ENCODE measurements at regions of chr5 and their contacts with region 1.

Region 1: GRCh38 chr5:33166522-33166921 is 274.2 kb upstream of the TARS1 start:
- DNase-seq: no peak
- H3K4me3 ChIP-seq: no peak overlapping the region
- H3K27ac ChIP-seq: no peak overlapping the region
- H3K4me1 ChIP-seq: no peaks in the 10 kb centered on the region
- H3K27me3 ChIP-seq: no peaks in the 10 kb centered on the region
- CTCF ChIP-seq: no peak

Region 2: GRCh38 chr5:32489791-32490582 is 676.5 kb before region 1 on chr5:
- CTCF ChIA-PET with region 1: no interaction called
- dilution Hi-C with region 1: no loop called
- in situ Hi-C with region 1: no loop called
- intact Hi-C with region 1: loop called (anchors 10 kb)
- DNase-seq: peak; percentile 33
- H3K4me3 ChIP-seq: no peak overlapping the region
- H3K27ac ChIP-seq: no peak overlapping the region
- H3K4me1 ChIP-seq: no peaks in the 10 kb centered on the region
- H3K27me3 ChIP-seq: no peaks in the 10 kb centered on the region
- CTCF ChIP-seq: peak; percentile 67 to 72

Region 3: GRCh38 chr5:32852535-32852934 is 314.0 kb before region 1 on chr5:
- CTCF ChIA-PET with region 1: no interaction called
- dilution Hi-C with region 1: no loop called
- in situ Hi-C with region 1: no loop called
- intact Hi-C with region 1: no loop called
- DNase-seq: no peak
- H3K4me3 ChIP-seq: no peak overlapping the region
- H3K27ac ChIP-seq: no peak overlapping the region
- H3K4me1 ChIP-seq: no peaks in the 10 kb centered on the region
- H3K27me3 ChIP-seq: peaks cover 2% of the 10 kb centered on the region
- CTCF ChIP-seq: peak in 1 of 2 donors; percentile 17

Region 4: DNA sequence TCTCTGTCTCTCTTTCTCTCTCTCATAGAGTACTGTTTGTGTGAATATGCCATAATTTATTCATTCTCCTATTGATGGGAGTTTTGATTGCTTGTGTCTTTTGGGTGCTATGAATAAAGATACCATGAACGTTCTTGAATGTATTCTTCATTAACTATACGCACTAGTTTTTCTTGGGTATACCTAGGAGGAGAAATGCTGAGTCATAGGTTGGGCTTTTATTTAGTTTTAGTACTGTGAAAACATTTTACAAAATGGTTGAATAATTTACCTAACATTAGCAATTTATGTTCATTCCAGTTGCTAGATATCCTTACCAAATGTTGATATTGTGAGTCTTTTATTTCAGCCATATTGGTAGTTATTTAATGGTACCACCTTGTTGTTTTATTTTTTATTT is 262.9 kb before region 1 on chr5:
- CTCF ChIA-PET with region 1: no interaction called
- dilution Hi-C with region 1: no loop called
- in situ Hi-C with region 1: no loop called
- intact Hi-C with region 1: no loop called
- DNase-seq: no peak
- H3K4me3 ChIP-seq: no peak overlapping the region
- H3K27ac ChIP-seq: no peak overlapping the region
- H3K4me1 ChIP-seq: no peaks in the 10 kb centered on the region
- H3K27me3 ChIP-seq: no peaks in the 10 kb centered on the region
- CTCF ChIP-seq: no peak

Region 5: DNA sequence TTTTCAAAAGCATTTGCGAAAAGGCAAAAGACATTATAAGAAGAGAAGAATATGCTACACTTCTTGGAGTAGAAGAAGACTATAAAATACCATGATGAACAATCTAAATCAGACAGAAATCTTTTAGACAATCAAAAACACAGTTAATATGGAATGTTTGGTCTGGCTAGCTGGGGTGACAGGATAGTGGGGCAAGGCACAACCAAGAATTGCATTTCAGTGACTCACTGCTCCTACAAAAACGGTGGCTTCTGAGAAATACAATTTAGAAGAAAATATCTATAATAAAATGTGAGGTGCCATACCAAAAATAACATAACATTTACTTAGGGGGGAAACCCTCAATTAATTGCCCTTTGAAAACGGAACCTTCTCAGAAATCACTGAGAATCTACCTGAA is 92.0 kb before region 1 on chr5:
- CTCF ChIA-PET with region 1: no interaction called
- dilution Hi-C with region 1: no loop called
- in situ Hi-C with region 1: no loop called
- intact Hi-C with region 1: no loop called
- DNase-seq: no peak
- H3K4me3 ChIP-seq: no peak overlapping the region
- H3K27ac ChIP-seq: no peak overlapping the region
- H3K4me1 ChIP-seq: peaks cover 5% of the 10 kb centered on the region
- H3K27me3 ChIP-seq: no peaks in the 10 kb centered on the region
- CTCF ChIP-seq: no peak

Region 6: GRCh38 chr5:33136785-33137184 is 29.7 kb before region 1 on chr5:
- CTCF ChIA-PET with region 1: no interaction called
- dilution Hi-C with region 1: loop called (anchors 5 kb)
- in situ Hi-C with region 1: no loop called
- intact Hi-C with region 1: no loop called
- DNase-seq: no peak
- H3K4me3 ChIP-seq: no peak overlapping the region
- H3K27ac ChIP-seq: no peak overlapping the region
- H3K4me1 ChIP-seq: no peaks in the 10 kb centered on the region
- H3K27me3 ChIP-seq: no peaks in the 10 kb centered on the region
- CTCF ChIP-seq: no peak

Region 7: GRCh38 chr5:33244441-33245150 is 78.1 kb after region 1 on chr5:
- CTCF ChIA-PET with region 1: no interaction called
- dilution Hi-C with region 1: loop called (anchors 5 kb)
- in situ Hi-C with region 1: no loop called
- intact Hi-C with region 1: no loop called
- DNase-seq: no peak
- H3K4me3 ChIP-seq: no peak overlapping the region
- H3K27ac ChIP-seq: no peak overlapping the region
- H3K4me1 ChIP-seq: no peaks in the 10 kb centered on the region
- H3K27me3 ChIP-seq: no peaks in the 10 kb centered on the region
- CTCF ChIP-seq: no peak